ENCODE measurements at regions of chrX and their contacts with region 1.

Region 1: DNA sequence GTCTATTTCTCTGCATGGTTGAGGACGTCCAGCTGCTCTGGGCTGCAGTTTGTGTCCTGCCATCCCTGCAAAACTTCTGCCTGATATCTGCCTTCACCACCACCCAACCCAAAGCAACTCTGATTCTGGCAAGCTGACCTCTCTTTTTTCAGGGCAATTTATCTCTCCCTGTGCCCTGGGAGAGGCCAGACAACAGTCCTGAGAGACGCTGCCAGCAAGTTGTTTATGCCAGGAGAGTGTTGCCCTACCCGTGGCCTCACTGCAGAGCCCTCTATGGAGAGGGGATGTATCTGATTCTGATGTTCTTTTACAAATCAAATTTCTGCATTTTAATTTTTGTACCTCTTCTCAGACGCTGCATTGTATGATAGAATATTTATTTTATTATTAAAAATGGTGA is 36.6 kb upstream of the BRWD3 start:
- DNase-seq: no peak
- H3K4me3 ChIP-seq: no peak overlapping the region
- H3K27ac ChIP-seq: no peak overlapping the region
- H3K4me1 ChIP-seq: no peaks in the 10 kb centered on the region
- H3K27me3 ChIP-seq: no peaks in the 10 kb centered on the region
- CTCF ChIP-seq: no peak
- POLR2A ChIP-seq: no peak

Region 2: GRCh38 chrX:80354966-80355465 is 491.2 kb before region 1 on chrX:
- intact Hi-C with region 1: no loop called
- DNase-seq: peak; percentile 32
- H3K4me3 ChIP-seq: no peak overlapping the region
- H3K27ac ChIP-seq: no peak overlapping the region
- H3K4me1 ChIP-seq: no peaks in the 10 kb centered on the region
- H3K27me3 ChIP-seq: peaks cover 0 to 7% (median 0%) of the 10 kb centered on the region in 7 donors
- CTCF ChIP-seq: no peak
- POLR2A ChIP-seq: no peak

Region 3: DNA sequence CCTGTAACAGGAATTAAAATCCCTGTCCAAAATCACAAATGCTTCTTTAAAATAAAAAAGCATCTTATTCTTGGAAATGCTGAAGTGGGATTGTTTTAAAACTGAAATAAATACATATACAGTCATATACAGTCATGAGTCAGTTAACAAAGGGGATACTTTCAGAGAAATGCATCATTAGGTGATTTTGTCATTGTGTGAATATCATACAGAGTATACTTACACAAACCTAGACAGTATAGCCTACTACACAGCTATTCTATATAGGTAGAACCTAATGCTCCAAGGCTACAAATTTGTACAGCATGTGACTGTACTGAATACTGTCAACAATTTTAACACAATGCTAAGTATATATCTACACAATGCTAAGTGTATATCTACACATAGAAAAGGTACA is 140.9 kb before region 1 on chrX:
- intact Hi-C with region 1: no loop called
- DNase-seq: no peak
- H3K4me3 ChIP-seq: no peak overlapping the region
- H3K27ac ChIP-seq: no peak overlapping the region
- H3K4me1 ChIP-seq: no peaks in the 10 kb centered on the region
- H3K27me3 ChIP-seq: no peaks in the 10 kb centered on the region
- CTCF ChIP-seq: no peak
- POLR2A ChIP-seq: no peak

Region 4: DNA sequence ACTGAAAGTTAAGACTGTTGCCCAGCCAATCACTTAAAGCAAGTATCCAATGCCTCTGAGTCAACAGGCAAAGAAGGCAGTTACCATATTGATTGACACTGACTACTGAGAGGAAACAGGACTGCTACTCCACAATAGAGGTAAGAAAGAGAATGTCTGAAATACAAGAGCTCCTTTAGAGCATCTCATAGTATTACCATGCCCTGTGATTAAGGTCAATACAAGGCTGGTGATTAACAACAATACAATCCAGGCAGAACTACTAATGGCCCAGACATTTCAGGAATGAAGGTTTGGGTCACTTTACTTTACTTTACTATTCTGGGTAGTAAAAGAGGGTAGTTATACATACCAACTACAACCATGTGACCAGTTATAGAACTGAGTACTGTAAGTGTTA is 81.1 kb before region 1 on chrX:
- intact Hi-C with region 1: no loop called
- DNase-seq: no peak
- H3K4me3 ChIP-seq: no peak overlapping the region
- H3K27ac ChIP-seq: no peak overlapping the region
- H3K4me1 ChIP-seq: no peaks in the 10 kb centered on the region
- H3K27me3 ChIP-seq: no peaks in the 10 kb centered on the region
- CTCF ChIP-seq: no peak
- POLR2A ChIP-seq: no peak

Region 5: DNA sequence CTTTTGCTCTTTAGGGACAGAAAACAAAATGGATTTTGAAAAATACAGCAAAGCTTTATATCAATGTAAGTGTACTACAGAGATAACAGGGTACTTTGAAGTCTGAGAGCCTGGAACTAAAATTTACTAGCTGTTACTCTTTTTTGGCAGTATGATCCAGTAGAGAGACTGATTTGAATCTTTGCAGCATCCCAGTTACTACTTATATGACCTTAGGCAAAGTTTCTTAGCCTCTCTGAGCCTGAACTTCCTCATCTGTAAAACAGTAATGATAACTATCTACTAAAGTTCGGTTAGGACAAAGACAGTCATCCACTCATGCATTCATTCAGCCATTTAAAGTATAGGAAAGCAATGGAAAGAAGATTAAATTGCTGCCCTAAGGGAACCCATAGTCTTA is 46.7 kb before region 1 on chrX:
- intact Hi-C with region 1: loop called (anchors 5 kb)
- DNase-seq: no peak
- H3K4me3 ChIP-seq: no peak overlapping the region
- H3K27ac ChIP-seq: no peak overlapping the region
- H3K4me1 ChIP-seq: peaks cover 0 to 5% (median 0%) of the 10 kb centered on the region in 6 donors
- H3K27me3 ChIP-seq: no peaks in the 10 kb centered on the region
- CTCF ChIP-seq: no peak
- POLR2A ChIP-seq: no peak

Region 6: DNA sequence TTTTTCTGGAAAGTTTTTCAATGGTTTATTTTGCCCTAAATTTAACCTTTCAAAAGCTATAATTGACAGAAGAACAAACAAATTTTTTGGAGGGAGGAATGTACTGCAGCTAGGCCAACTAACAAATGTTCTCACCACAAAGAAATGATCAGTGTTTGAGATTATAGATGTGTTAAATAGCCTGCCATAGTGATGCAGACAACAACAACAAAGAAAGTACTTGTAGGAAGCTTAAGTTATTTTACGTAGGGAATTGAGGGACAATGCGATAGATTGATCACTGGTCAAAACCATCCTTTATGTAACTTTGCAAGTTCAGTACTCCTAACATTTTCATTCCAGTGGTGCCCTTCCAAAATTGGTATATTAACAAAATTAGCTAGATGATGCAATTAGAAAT is 696.0 kb after region 1 on chrX:
- intact Hi-C with region 1: no loop called
- DNase-seq: no peak
- H3K4me3 ChIP-seq: no peak overlapping the region
- H3K27ac ChIP-seq: no peak overlapping the region
- H3K4me1 ChIP-seq: no peaks in the 10 kb centered on the region
- H3K27me3 ChIP-seq: no peaks in the 10 kb centered on the region
- CTCF ChIP-seq: no peak
- POLR2A ChIP-seq: no peak

Measured in spleen (tissue), 13 donors.